ENCODE measurements at regions of chr11 and their contacts with region 1.

Region 1: DNA sequence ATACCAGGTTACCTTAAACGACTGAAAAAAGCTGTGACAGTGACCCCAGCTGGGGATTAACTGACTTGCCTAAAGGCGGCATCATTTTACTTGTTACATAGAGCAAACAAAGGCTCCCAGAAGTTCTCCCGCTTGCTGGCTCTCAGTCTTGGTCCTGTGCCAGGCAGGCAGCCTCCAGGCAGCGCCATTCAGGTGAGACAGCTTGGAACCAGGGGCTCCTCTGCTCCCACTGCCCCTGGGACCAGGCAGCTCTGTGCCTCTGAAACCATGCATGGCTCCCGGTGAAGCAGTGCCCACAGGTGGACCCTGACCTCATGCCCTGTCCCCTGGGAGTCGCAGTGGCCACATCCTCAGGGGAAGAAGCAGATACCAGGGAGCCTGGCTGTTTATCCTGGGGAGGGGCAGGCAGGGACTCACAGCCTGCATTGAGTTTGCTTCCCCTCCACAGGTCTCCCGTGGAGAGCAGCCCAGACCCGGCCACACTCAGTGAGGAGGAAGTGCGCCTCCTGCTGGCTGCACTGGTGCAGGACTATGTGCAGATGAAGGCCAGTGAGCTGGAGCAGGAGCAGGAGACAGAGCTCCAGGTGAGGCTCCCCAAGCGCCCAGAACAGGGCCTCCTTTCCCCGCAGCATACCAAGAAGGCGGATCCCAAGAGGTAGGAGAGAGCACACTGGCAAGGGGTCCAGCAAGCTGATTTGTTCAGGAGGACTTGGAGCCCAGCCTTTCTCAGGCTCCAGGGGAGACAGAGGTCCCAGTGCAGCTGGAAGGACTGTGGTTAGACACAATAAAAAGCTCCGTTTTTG is 15.6 kb upstream of the CYP2R1 start:
- DNase-seq: peak; percentile 90
- H3K4me3 ChIP-seq: no peak overlapping the region
- H3K27ac ChIP-seq: no peak overlapping the region
- H3K4me1 ChIP-seq: peaks cover 0 to 18% (median 9%) of the 10 kb centered on the region in 4 donors
- H3K27me3 ChIP-seq: no peaks in the 10 kb centered on the region
- CTCF ChIP-seq: peak; percentile 72 to 85 (median 82)
- EP300 ChIP-seq: no peak
- POLR2A ChIP-seq: no peak

Region 2: GRCh38 chr11:14656536-14657457 is 250.8 kb before region 1 on chr11:
- in situ Hi-C with region 1: no loop called
- intact Hi-C with region 1: no loop called
- DNase-seq: no peak
- H3K4me3 ChIP-seq: no peak overlapping the region
- H3K27ac ChIP-seq: peak overlapping the region in 2 of 4 donors; percentile 50 to 56
- H3K4me1 ChIP-seq: peaks cover 0 to 17% (median 0%) of the 10 kb centered on the region in 4 donors
- H3K27me3 ChIP-seq: no peaks in the 10 kb centered on the region
- CTCF ChIP-seq: no peak
- EP300 ChIP-seq: no peak
- POLR2A ChIP-seq: no peak

Region 3: GRCh38 chr11:14789879-14790484 is 117.6 kb before region 1 on chr11:
- in situ Hi-C with region 1: loop called in 3 of 4 experiments (anchors 5 to 10 kb)
- intact Hi-C with region 1: no loop called
- DNase-seq: no peak
- H3K4me3 ChIP-seq: no peak overlapping the region
- H3K27ac ChIP-seq: no peak overlapping the region
- H3K4me1 ChIP-seq: no peaks in the 10 kb centered on the region
- H3K27me3 ChIP-seq: no peaks in the 10 kb centered on the region
- CTCF ChIP-seq: peak in 4 of 5 experiments; percentile 37 to 46 (median 40)
- EP300 ChIP-seq: no peak
- POLR2A ChIP-seq: no peak

Region 4: DNA sequence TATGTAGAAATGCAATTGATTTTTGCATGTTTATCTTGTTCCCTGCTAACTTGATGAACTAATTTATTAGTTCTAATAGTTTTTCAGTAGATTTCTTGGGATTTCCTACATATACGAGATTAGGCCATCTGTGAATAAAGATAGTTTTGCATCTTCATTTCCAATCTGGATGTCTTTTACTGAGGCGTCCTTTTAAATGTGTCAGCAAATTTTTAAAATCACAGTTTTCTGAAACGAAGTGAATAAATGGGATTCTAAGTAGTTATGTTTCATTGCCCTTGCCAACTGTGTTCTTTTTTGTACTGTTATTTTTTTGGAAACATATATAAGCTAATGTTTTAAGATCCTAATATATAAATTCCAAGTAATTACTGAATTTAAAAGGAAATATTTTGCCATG is 65.6 kb before region 1 on chr11:
- in situ Hi-C with region 1: no loop called
- intact Hi-C with region 1: no loop called
- DNase-seq: no peak
- H3K4me3 ChIP-seq: no peak overlapping the region
- H3K27ac ChIP-seq: no peak overlapping the region
- H3K4me1 ChIP-seq: no peaks in the 10 kb centered on the region
- H3K27me3 ChIP-seq: no peaks in the 10 kb centered on the region
- CTCF ChIP-seq: no peak
- EP300 ChIP-seq: no peak
- POLR2A ChIP-seq: no peak

Region 5: GRCh38 chr11:14892036-14892567 is 15.5 kb before region 1 on chr11 and contains the start of gene CYP2R1:
- in situ Hi-C with region 1: no loop called
- intact Hi-C with region 1: no loop called
- DNase-seq: peak; percentile 98
- H3K4me3 ChIP-seq: peak within 1 kb of the TSS; percentile 55 to 78 (median 64)
- H3K27ac ChIP-seq: peak within 1 kb of the TSS; percentile 92 to 98 (median 95)
- H3K4me1 ChIP-seq: peaks cover 4 to 39% (median 9%) of the 10 kb centered on the region in 4 donors
- H3K27me3 ChIP-seq: no peaks in the 10 kb centered on the region
- CTCF ChIP-seq: no peak
- EP300 ChIP-seq: no peak
- POLR2A ChIP-seq: peak; percentile 86
- total RNA-seq, gene CYP2R1: 26.1 to 54.2 (median 44.6) TPM

Region 6: DNA sequence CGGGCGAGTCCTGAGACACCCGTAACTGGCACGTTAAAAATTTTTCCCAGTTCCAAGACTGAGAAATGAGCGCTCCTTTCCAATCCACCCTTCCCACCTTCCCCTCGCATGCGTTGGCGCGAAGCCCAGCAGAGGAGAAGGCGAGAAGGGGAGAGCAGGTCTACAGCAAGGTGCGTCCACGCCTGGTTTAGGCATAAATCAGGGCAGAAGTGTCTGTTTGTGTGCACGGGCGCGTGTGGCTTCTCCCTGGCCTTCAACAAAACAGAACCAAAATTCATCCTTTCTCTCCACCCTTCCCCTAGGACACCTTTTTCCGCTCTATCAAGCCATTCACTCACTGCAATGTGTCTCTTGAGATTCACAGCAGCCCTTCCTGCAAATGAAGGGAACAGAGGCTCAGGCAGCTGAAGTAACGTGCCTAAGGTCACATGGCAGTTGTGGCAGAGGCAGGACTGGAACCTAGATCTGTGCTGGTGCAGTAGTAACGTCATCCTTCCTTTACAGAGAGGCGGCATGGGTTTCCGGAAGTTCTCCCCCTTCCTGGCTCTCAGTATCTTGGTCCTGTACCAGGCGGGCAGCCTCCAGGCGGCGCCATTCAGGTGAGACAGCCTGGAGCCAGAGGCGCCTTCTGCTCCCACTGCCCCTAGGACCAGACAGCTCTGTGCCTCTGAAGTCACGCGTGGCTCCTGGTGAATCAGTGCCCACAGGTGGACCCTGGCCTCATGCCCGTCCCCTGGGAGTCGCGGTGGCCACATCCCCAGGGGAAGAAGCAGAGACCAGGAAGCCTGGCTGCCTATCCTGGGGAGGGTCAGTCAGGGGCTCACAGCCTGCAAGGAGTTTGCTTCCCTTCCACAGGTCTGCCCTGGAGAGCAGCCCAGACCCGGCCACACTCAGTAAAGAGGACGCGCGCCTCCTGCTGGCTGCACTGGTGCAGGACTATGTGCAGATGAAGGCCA is 166.9 kb after region 1 on chr11:
- in situ Hi-C with region 1: loop called in 3 of 4 experiments (anchors 10 to 25 kb)
- intact Hi-C with region 1: loop called (anchors 5 kb)
- DNase-seq: peak; percentile 86
- H3K4me3 ChIP-seq: peak overlapping the region in 3 of 4 donors; percentile 8 to 34 (median 19)
- H3K27ac ChIP-seq: no peak overlapping the region
- H3K4me1 ChIP-seq: peaks cover 18 to 21% (median 19%) of the 10 kb centered on the region in 4 donors
- H3K27me3 ChIP-seq: peaks cover 44% of the 10 kb centered on the region
- CTCF ChIP-seq: peak; percentile 60 to 78 (median 77)
- EP300 ChIP-seq: no peak
- POLR2A ChIP-seq: no peak

Region 7: GRCh38 chr11:15208378-15209222 is 301.0 kb after region 1 on chr11:
- in situ Hi-C with region 1: no loop called
- intact Hi-C with region 1: loop called (anchors 10 kb)
- DNase-seq: peak; percentile 79
- H3K4me3 ChIP-seq: no peak overlapping the region
- H3K27ac ChIP-seq: no peak overlapping the region
- H3K4me1 ChIP-seq: peaks cover 0 to 7% (median 3%) of the 10 kb centered on the region in 4 donors
- H3K27me3 ChIP-seq: no peaks in the 10 kb centered on the region
- CTCF ChIP-seq: peak; percentile 89 to 93 (median 91)
- EP300 ChIP-seq: no peak
- POLR2A ChIP-seq: no peak

Measured in transverse colon (tissue), 4 donors.